CD4-positive, alpha-beta memory T cell (primary cell): ENCODE measurements at regions of chr17 and their contacts with region 1.

Region 1: DNA sequence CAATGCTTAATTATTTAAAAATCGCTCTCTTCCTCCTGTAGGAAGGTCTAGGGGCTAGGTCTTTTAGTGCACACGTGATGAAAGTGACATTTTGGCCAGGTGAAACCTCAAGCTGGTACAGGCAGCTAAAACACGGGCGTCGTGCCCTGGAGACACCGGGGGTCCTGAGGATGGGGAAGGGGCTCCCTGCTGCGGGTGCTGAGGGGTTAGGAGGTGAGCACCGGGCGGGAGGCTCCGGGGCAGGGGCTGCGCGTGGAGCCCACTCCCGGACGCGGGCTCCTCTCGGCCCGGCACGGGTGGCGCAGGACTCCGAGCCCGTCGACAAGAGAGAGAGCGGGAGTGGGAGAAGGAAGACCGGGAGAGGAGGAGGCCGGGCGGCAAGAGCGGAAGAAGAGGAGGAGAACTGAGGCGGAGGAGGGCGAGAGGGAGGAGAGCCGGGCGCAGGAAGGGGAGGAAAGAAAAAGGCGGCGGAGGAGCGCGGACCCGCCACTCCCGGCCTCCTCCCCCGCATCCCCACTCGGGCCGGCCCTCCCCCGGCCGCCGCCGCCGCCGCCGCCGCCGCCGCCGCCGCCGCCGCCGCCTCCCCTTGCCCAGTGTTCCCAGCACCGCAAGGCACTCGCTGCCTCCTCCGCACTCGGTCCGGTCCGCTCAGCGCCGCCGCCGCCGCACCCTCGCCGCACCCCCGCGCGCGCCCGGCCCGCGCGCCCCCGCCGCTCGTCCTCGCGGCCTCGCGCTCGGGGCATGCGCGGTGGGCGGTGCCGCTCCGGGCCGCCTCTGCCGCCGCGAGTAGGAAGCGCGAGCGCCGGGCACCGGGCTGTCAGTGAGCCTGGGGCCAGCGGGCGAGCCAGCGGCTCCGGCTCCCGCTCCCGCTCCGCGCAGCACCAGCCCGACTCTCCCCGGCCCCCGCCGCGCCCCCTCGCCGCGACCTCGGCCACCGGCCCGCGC is at the start of gene PRKCA:
- DNase-seq: peak; percentile 60 to 78 (median 73)
- H3K4me3 ChIP-seq: peak within 1 kb of the TSS; percentile 63 to 86
- H3K4me3 Mint-ChIP-seq: peak within 1 kb of the TSS; percentile 94 to 100 (median 99)
- H3K27ac ChIP-seq: peak within 1 kb of the TSS; percentile 59
- H3K27ac Mint-ChIP-seq: peak within 1 kb of the TSS; percentile 90 to 97 (median 96)
- H3K4me1 ChIP-seq: peaks cover 42% of the 10 kb centered on the region
- H3K4me1 Mint-ChIP-seq: peaks cover 38 to 63% (median 46%) of the 10 kb centered on the region in 4 donors
- H3K27me3 ChIP-seq: no peaks in the 10 kb centered on the region
- H3K27me3 Mint-ChIP-seq: no peaks in the 10 kb centered on the region
- total RNA-seq, gene PRKCA: 107 TPM

Region 2: GRCh38 chr17:66115246-66115645 is 186.8 kb before region 1 on chr17:
- CTCF ChIA-PET with region 1: no interaction called
- POLR2A ChIA-PET with region 1: no interaction called
- intact Hi-C with region 1: no loop called
- DNase-seq: no peak
- H3K4me3 ChIP-seq: no peak overlapping the region
- H3K4me3 Mint-ChIP-seq: no peak overlapping the region
- H3K27ac ChIP-seq: no peak overlapping the region
- H3K27ac Mint-ChIP-seq: no peak overlapping the region
- H3K4me1 ChIP-seq: no peaks in the 10 kb centered on the region
- H3K4me1 Mint-ChIP-seq: no peaks in the 10 kb centered on the region
- H3K27me3 ChIP-seq: no peaks in the 10 kb centered on the region
- H3K27me3 Mint-ChIP-seq: no peaks in the 10 kb centered on the region

Region 3: GRCh38 chr17:66287911-66288310 is 14.2 kb before region 1 on chr17:
- CTCF ChIA-PET with region 1: interaction called, 6 read pairs
- POLR2A ChIA-PET with region 1: interaction called, 21 read pairs
- intact Hi-C with region 1: no loop called
- DNase-seq: no peak
- H3K4me3 ChIP-seq: no peak overlapping the region
- H3K4me3 Mint-ChIP-seq: peak overlapping the region in 3 of 8 donors; percentile 17 to 30 (median 22)
- H3K27ac ChIP-seq: no peak overlapping the region
- H3K27ac Mint-ChIP-seq: peak overlapping the region in 5 of 7 donors; percentile 23 to 88 (median 41)
- H3K4me1 ChIP-seq: peaks cover 27% of the 10 kb centered on the region
- H3K4me1 Mint-ChIP-seq: peaks cover 26 to 53% (median 39%) of the 10 kb centered on the region in 4 donors
- H3K27me3 ChIP-seq: no peaks in the 10 kb centered on the region
- H3K27me3 Mint-ChIP-seq: no peaks in the 10 kb centered on the region

Region 4: GRCh38 chr17:66331038-66331816 is 29.2 kb after region 1 on chr17:
- CTCF ChIA-PET with region 1: interaction called, 3 read pairs
- POLR2A ChIA-PET with region 1: interaction called, 31 read pairs
- intact Hi-C with region 1: loop called (anchors 1 kb)
- DNase-seq: peak; percentile 47 to 71 (median 69)
- H3K4me3 ChIP-seq: peak overlapping the region in 1 of 2 donors; percentile 17
- H3K4me3 Mint-ChIP-seq: peak overlapping the region; percentile 79 to 92 (median 84)
- H3K27ac ChIP-seq: peak overlapping the region; percentile 51
- H3K27ac Mint-ChIP-seq: peak overlapping the region; percentile 86 to 97 (median 93)
- H3K4me1 ChIP-seq: peaks cover 92% of the 10 kb centered on the region
- H3K4me1 Mint-ChIP-seq: peaks cover 57 to 91% (median 70%) of the 10 kb centered on the region in 4 donors
- H3K27me3 ChIP-seq: no peaks in the 10 kb centered on the region
- H3K27me3 Mint-ChIP-seq: no peaks in the 10 kb centered on the region

Region 5: DNA sequence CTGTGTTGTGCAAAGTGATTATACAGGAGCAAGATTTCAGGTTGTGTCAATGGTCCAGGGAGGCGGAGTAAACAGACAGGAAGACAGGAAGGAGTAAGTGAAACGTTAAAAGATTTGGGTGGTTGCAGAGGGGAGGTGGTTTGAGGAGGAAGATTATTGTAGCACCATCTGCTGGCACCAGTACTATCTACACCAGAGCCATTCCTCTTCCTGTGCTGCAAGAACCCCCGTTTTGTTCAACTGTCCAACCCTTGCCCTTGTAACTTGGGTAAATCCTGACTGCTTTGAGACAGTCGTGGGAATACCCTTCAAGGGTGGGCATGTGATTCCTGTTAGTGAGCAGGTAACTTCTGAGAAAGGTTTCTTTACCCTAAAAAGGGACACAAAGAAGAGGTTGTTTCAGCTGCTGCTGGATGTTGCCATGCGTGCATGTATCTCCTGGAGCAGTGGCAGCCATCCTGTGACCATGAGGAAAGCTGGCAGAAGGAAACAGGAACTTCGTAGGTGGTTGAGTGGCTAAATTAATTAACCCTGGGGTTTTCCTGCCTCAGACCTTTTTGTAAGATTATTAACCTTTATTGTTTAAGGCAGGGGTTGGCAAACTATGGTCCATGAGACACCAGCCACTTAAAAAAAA is 124.4 kb after region 1 on chr17:
- CTCF ChIA-PET with region 1: interaction called, 3 read pairs
- POLR2A ChIA-PET with region 1: interaction called, 3 read pairs
- intact Hi-C with region 1: loop called (anchors 1 kb)
- DNase-seq: peak; percentile 59 to 68 (median 62)
- H3K4me3 ChIP-seq: no peak overlapping the region
- H3K4me3 Mint-ChIP-seq: peak overlapping the region; percentile 45 to 86 (median 64)
- H3K27ac ChIP-seq: no peak overlapping the region
- H3K27ac Mint-ChIP-seq: peak overlapping the region; percentile 45 to 91 (median 87)
- H3K4me1 ChIP-seq: peaks cover 17% of the 10 kb centered on the region
- H3K4me1 Mint-ChIP-seq: peaks cover 38 to 83% (median 60%) of the 10 kb centered on the region in 4 donors
- H3K27me3 ChIP-seq: no peaks in the 10 kb centered on the region
- H3K27me3 Mint-ChIP-seq: no peaks in the 10 kb centered on the region

Region 6: GRCh38 chr17:66541461-66542128 is 239.5 kb after region 1 on chr17:
- CTCF ChIA-PET with region 1: no interaction called
- POLR2A ChIA-PET with region 1: no interaction called
- intact Hi-C with region 1: no loop called
- DNase-seq: no peak
- H3K4me3 ChIP-seq: no peak overlapping the region
- H3K4me3 Mint-ChIP-seq: peak overlapping the region in 6 of 8 donors; percentile 23 to 70 (median 46)
- H3K27ac ChIP-seq: no peak overlapping the region
- H3K27ac Mint-ChIP-seq: peak overlapping the region in 5 of 7 donors; percentile 14 to 74 (median 15)
- H3K4me1 ChIP-seq: peaks cover 45% of the 10 kb centered on the region
- H3K4me1 Mint-ChIP-seq: peaks cover 42 to 78% (median 62%) of the 10 kb centered on the region in 4 donors
- H3K27me3 ChIP-seq: no peaks in the 10 kb centered on the region
- H3K27me3 Mint-ChIP-seq: no peaks in the 10 kb centered on the region